ENCODE measurements at regions of chr12 and their contacts with region 1.

Region 1: GRCh38 chr12:56987551-56988053 is 18.7 kb downstream of the ZBTB39 start:
- DNase-seq: no peak
- H3K4me3 ChIP-seq: no peak overlapping the region
- CTCF ChIP-seq: peak; percentile 97

Region 2: GRCh38 chr12:56724972-56725722 is 262.5 kb before region 1 on chr12 and contains the start of gene NACA:
- CTCF ChIA-PET with region 1: interaction called, 10 read pairs
- POLR2A ChIA-PET with region 1: no interaction called
- DNase-seq: peak; percentile 93
- H3K4me3 ChIP-seq: peak within 1 kb of the TSS; percentile 99
- CTCF ChIP-seq: no peak

Region 3: GRCh38 chr12:56751712-56752598 is 235.6 kb before region 1 on chr12 and contains the start of gene PRIM1:
- CTCF ChIA-PET with region 1: interaction called, 303 read pairs
- POLR2A ChIA-PET with region 1: no interaction called
- DNase-seq: no peak
- H3K4me3 ChIP-seq: peak within 1 kb of the TSS; percentile 96
- CTCF ChIP-seq: no peak

Region 4: DNA sequence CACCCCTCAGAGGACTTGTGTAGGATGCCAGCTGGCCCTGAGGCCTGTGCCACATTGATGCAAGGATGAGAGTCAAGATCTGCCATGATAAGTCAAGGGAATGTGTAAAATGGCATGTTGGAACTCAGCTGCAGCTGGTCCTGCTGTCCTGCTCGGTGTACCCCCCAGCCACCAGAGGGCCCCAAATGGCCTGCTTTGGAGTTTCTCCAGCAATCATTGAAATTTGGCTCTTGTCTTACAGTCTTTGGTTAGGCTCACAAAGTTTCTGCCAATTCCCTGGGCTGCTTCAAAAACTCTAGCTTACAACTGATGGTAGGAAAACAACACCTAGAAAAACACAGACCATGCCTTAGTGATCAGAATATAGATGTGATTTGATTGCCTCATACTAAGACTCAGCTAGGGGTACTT is 147.7 kb before region 1 on chr12:
- CTCF ChIA-PET with region 1: interaction called, 11 read pairs
- POLR2A ChIA-PET with region 1: no interaction called
- DNase-seq: no peak
- H3K4me3 ChIP-seq: no peak overlapping the region
- CTCF ChIP-seq: peak; percentile 29

Measured in AG04449 (cell line).